Mammary epithelial cell (primary cell): ENCODE measurements at regions of chr16 and their contacts with region 1.

Region 1: GRCh38 chr16:85610508-85611332 is 2.4 kb upstream of the GSE1 start:
- DNase-seq: peak; percentile 78
- H3K4me3 ChIP-seq: peak overlapping the region in 1 of 3 experiments; percentile 55
- H3K27ac ChIP-seq: peak overlapping the region; percentile 19
- H3K4me1 ChIP-seq: peaks cover 43% of the 10 kb centered on the region
- H3K27me3 ChIP-seq: no peaks in the 10 kb centered on the region
- CTCF ChIP-seq: peak; percentile 84 to 96

Region 2: GRCh38 chr16:85114909-85115567 is 495.7 kb before region 1 on chr16:
- CTCF ChIA-PET with region 1: no interaction called
- dilution Hi-C with region 1: no loop called
- in situ Hi-C with region 1: no loop called
- intact Hi-C with region 1: loop called (anchors 2 kb)
- DNase-seq: peak; percentile 61
- H3K4me3 ChIP-seq: no peak overlapping the region
- H3K27ac ChIP-seq: no peak overlapping the region
- H3K4me1 ChIP-seq: no peaks in the 10 kb centered on the region
- H3K27me3 ChIP-seq: no peaks in the 10 kb centered on the region
- CTCF ChIP-seq: peak; percentile 96 to 100

Region 3: DNA sequence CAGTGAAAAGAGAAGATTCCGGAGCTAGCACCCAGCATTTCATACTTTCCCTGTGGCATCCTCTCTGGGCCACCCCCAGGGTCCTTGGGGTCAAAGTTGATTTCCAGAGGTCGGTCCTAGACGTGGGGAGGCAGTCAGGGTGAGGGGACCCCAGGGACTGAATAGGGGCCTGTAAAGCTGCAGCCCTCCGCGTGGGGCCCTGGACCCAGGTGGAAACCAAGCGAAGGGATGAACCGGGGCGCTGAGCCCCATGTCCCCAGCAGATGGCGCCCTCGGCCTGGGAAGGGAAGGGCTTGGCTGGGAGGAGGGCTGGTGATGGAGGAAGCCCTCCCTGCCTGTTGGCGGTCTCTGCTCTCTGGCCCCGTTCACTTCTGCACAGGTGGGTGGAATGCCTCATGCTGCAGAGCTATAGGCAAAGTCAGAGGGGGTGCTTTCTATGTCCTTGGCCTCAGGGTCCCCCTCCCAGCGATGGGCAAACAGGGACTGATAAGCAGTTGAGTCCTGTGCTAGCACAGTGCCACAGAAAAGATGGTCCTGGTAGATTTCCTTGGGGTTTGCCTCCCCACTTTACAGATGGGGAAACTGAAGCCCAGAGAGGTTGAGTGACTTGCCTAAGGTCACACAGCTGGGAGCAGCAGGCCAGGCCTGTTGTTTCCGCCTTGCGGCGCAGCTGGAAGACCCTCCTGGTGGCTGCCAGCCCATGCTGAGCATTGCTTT is 335.0 kb before region 1 on chr16:
- CTCF ChIA-PET with region 1: no interaction called
- dilution Hi-C with region 1: no loop called
- in situ Hi-C with region 1: loop called in 1 of 2 experiments (anchors 25 kb)
- intact Hi-C with region 1: loop called (anchors 1 kb)
- DNase-seq: peak; percentile 32
- H3K4me3 ChIP-seq: no peak overlapping the region
- H3K27ac ChIP-seq: no peak overlapping the region
- H3K4me1 ChIP-seq: no peaks in the 10 kb centered on the region
- H3K27me3 ChIP-seq: no peaks in the 10 kb centered on the region
- CTCF ChIP-seq: peak; percentile 88 to 94

Region 4: DNA sequence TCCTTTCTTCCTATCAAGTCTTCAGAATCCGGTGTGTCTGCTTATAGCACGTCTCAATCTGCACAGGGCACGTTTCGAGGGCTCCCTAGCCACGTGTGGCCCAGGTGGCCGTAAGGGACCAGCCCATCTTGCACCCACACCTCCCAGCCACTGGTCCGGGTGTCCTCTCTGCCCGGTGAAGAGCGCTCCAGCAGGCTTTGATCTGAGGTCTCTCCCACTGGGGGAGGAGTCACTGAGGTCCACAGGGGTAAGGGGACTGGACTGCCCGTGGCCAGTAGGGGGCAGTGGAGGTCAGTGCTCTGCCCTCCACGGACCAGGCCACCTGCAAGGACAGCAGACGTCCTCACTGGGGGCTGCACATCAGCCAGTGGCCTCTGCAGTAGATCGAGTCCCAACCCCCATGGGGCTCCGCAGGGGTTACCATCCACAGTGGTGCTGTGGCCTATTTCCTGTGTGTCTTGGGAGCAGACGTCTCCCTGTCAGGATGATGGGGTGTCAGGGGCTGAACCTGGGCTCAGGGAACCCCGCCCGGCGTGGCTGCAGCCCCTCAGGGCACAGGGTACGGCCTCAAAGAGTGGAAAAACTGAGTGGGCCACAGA is 294.3 kb before region 1 on chr16:
- CTCF ChIA-PET with region 1: no interaction called
- dilution Hi-C with region 1: no loop called
- in situ Hi-C with region 1: loop called in 1 of 2 experiments (anchors 25 kb)
- intact Hi-C with region 1: loop called (anchors 1 kb)
- DNase-seq: peak; percentile 32
- H3K4me3 ChIP-seq: no peak overlapping the region
- H3K27ac ChIP-seq: no peak overlapping the region
- H3K4me1 ChIP-seq: peaks cover 16% of the 10 kb centered on the region
- H3K27me3 ChIP-seq: no peaks in the 10 kb centered on the region
- CTCF ChIP-seq: peak; percentile 70 to 93

Region 5: GRCh38 chr16:85393674-85394483 is 216.8 kb before region 1 on chr16:
- CTCF ChIA-PET with region 1: no interaction called
- dilution Hi-C with region 1: no loop called
- in situ Hi-C with region 1: no loop called
- intact Hi-C with region 1: loop called (anchors 1 kb)
- DNase-seq: no peak
- H3K4me3 ChIP-seq: no peak overlapping the region
- H3K27ac ChIP-seq: no peak overlapping the region
- H3K4me1 ChIP-seq: peaks cover 54% of the 10 kb centered on the region
- H3K27me3 ChIP-seq: no peaks in the 10 kb centered on the region
- CTCF ChIP-seq: peak; percentile 31 to 49

Region 6: GRCh38 chr16:85428168-85428898 is 182.4 kb before region 1 on chr16:
- CTCF ChIA-PET with region 1: interaction called, 4 read pairs
- dilution Hi-C with region 1: no loop called
- in situ Hi-C with region 1: loop called in 1 of 2 experiments (anchors 10 kb)
- intact Hi-C with region 1: loop called (anchors 2 kb)
- DNase-seq: no peak
- H3K4me3 ChIP-seq: no peak overlapping the region
- H3K27ac ChIP-seq: no peak overlapping the region
- H3K4me1 ChIP-seq: no peaks in the 10 kb centered on the region
- H3K27me3 ChIP-seq: no peaks in the 10 kb centered on the region
- CTCF ChIP-seq: peak; percentile 59 to 63

Region 7: GRCh38 chr16:85626191-85626981 is 15.7 kb after region 1 on chr16:
- CTCF ChIA-PET with region 1: no interaction called
- dilution Hi-C with region 1: no loop called
- in situ Hi-C with region 1: no loop called
- intact Hi-C with region 1: no loop called
- DNase-seq: no peak
- H3K4me3 ChIP-seq: no peak overlapping the region
- H3K27ac ChIP-seq: no peak overlapping the region
- H3K4me1 ChIP-seq: no peaks in the 10 kb centered on the region
- H3K27me3 ChIP-seq: no peaks in the 10 kb centered on the region
- CTCF ChIP-seq: no peak

Region 8: GRCh38 chr16:85659805-85660495 is 49.2 kb after region 1 on chr16:
- CTCF ChIA-PET with region 1: no interaction called
- dilution Hi-C with region 1: no loop called
- in situ Hi-C with region 1: no loop called
- intact Hi-C with region 1: no loop called
- DNase-seq: peak; percentile 36
- H3K4me3 ChIP-seq: no peak overlapping the region
- H3K27ac ChIP-seq: no peak overlapping the region
- H3K4me1 ChIP-seq: no peaks in the 10 kb centered on the region
- H3K27me3 ChIP-seq: no peaks in the 10 kb centered on the region
- CTCF ChIP-seq: peak; percentile 87 to 93

Region 9: GRCh38 chr16:85717393-85718121 is 106.8 kb after region 1 on chr16:
- CTCF ChIA-PET with region 1: interaction called, 7 read pairs
- dilution Hi-C with region 1: no loop called
- in situ Hi-C with region 1: no loop called
- intact Hi-C with region 1: loop called (anchors 1 kb)
- DNase-seq: no peak
- H3K4me3 ChIP-seq: no peak overlapping the region
- H3K27ac ChIP-seq: no peak overlapping the region
- H3K4me1 ChIP-seq: peaks cover 76% of the 10 kb centered on the region
- H3K27me3 ChIP-seq: no peaks in the 10 kb centered on the region
- CTCF ChIP-seq: peak; percentile 41 to 63